Heart right ventricle (tissue), 16 donors: ENCODE measurements at regions of chr16 and their contacts with region 1.

Region 1: DNA sequence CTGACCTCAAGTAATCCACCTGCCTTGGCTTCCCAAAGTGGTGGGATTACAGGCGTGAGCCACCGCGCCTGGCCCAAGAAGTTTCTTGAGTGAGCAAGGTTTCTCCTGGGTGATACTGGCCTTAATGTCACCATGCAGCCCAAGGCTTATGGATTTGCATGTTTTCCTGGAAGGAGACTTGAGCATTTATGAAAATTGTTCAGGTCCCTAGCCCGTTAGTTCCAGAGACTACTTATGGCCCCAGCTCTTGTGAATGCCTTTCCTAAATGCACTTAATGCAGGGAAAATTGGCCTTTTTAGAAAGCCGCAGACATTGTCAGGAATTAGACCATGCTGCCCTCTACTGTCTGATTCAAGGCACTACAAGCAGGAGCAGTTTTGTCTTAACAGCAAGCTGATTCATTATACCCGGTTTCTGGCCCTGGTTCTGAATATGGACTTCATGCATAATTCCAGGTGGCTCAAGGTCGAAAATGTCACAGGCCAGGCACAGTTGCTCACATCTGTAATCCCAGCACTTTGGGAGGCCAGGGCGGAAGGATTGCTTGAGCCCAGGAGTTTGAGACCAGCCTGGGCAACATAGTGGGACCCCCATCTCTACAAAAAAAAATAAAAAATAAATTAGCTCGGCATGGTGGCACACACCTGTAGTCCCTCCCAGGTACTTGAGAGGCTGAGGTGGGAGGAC is 91.3 kb downstream of the SNX29 start:
- DNase-seq: peak in 1 of 2 donors; percentile 53
- ATAC-seq: peak in 7 of 8 donors; percentile 55 to 85 (median 73)
- H3K4me3 ChIP-seq: no peak overlapping the region
- H3K27ac ChIP-seq: no peak overlapping the region
- H3K4me1 ChIP-seq: peaks cover 2 to 17% (median 9%) of the 10 kb centered on the region in 9 donors
- H3K27me3 ChIP-seq: no peaks in the 10 kb centered on the region
- CTCF ChIP-seq: peak; percentile 78 to 96 (median 92)

Region 2: GRCh38 chr16:11396241-11397048 is 671.4 kb before region 1 on chr16:
- intact Hi-C with region 1: loop called in 6 of 10 experiments (anchors 10 kb)
- DNase-seq: peak; percentile 70 to 71
- ATAC-seq: peak; percentile 77 to 87 (median 82)
- H3K4me3 ChIP-seq: no peak overlapping the region
- H3K27ac ChIP-seq: peak overlapping the region in 5 of 10 donors; percentile 13 to 55 (median 45)
- H3K4me1 ChIP-seq: peaks cover 0 to 7% (median 5%) of the 10 kb centered on the region in 9 donors
- H3K27me3 ChIP-seq: no peaks in the 10 kb centered on the region
- CTCF ChIP-seq: peak; percentile 95 to 100 (median 99)

Region 3: GRCh38 chr16:11727796-11728543 is 339.9 kb before region 1 on chr16:
- intact Hi-C with region 1: loop called in 1 of 10 experiments (anchors 10 kb)
- DNase-seq: no peak
- ATAC-seq: peak in 2 of 8 donors; percentile 9 to 33
- H3K4me3 ChIP-seq: no peak overlapping the region
- H3K27ac ChIP-seq: no peak overlapping the region
- H3K4me1 ChIP-seq: peaks cover 0 to 40% (median 16%) of the 10 kb centered on the region in 9 donors
- H3K27me3 ChIP-seq: no peaks in the 10 kb centered on the region
- CTCF ChIP-seq: no peak

Region 4: GRCh38 chr16:11851294-11852091 is 216.4 kb before region 1 on chr16 and contains the start of gene RSL1D1:
- intact Hi-C with region 1: loop called in 3 of 10 experiments (anchors 10 kb)
- DNase-seq: peak; percentile 91 to 92
- ATAC-seq: peak; percentile 97 to 100 (median 99)
- H3K4me3 ChIP-seq: peak within 1 kb of the TSS; percentile 65 to 94 (median 83)
- H3K27ac ChIP-seq: peak within 1 kb of the TSS; percentile 52 to 94 (median 89)
- H3K4me1 ChIP-seq: peaks cover 0 to 51% (median 36%) of the 10 kb centered on the region in 9 donors
- H3K27me3 ChIP-seq: no peaks in the 10 kb centered on the region
- CTCF ChIP-seq: no peak
- total RNA-seq, gene RSL1D1: 89.4 to 133 (median 105) TPM

Region 5: DNA sequence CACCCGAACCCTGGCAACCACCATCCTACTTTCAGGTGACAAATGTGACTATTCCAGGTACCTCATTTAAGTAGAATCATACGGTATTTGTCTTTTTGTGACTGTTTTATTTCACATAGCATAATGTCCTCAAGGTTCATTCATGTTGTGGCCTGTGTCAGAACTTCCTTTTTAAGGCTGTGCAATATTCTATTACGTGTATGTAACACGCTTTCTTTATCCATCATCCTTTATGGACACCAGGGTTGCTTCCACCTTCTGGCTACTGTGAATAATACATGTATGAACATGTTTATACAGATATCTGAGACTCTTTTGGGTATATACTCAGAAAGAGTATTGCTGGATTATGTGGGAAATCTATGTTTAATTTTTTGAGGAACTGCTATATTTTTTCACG is 187.9 kb before region 1 on chr16:
- intact Hi-C with region 1: loop called in 2 of 10 experiments (anchors 10 kb)
- DNase-seq: no peak
- ATAC-seq: no peak
- H3K4me3 ChIP-seq: no peak overlapping the region
- H3K27ac ChIP-seq: no peak overlapping the region
- H3K4me1 ChIP-seq: peaks cover 0 to 19% (median 0%) of the 10 kb centered on the region in 9 donors
- H3K27me3 ChIP-seq: no peaks in the 10 kb centered on the region
- CTCF ChIP-seq: no peak

Region 6: GRCh38 chr16:11955713-11956123 is 112.1 kb before region 1 on chr16:
- intact Hi-C with region 1: loop called in 2 of 10 experiments (anchors 5 to 10 kb)
- DNase-seq: no peak
- ATAC-seq: no peak
- H3K4me3 ChIP-seq: no peak overlapping the region
- H3K27ac ChIP-seq: no peak overlapping the region
- H3K4me1 ChIP-seq: no peaks in the 10 kb centered on the region
- H3K27me3 ChIP-seq: no peaks in the 10 kb centered on the region
- CTCF ChIP-seq: no peak

Region 7: GRCh38 chr16:11977376-11978041 is 90.3 kb before region 1 on chr16:
- intact Hi-C with region 1: loop called in 6 of 10 experiments (anchors 5 to 10 kb)
- DNase-seq: peak in 1 of 2 donors; percentile 23
- ATAC-seq: peak in 7 of 8 donors; percentile 50 to 76 (median 62)
- H3K4me3 ChIP-seq: peak overlapping the region; percentile 77 to 100 (median 90)
- H3K27ac ChIP-seq: peak overlapping the region in 9 of 10 donors; percentile 83 to 94 (median 87)
- H3K4me1 ChIP-seq: peaks cover 6 to 26% (median 24%) of the 10 kb centered on the region in 9 donors
- H3K27me3 ChIP-seq: no peaks in the 10 kb centered on the region
- CTCF ChIP-seq: no peak